HepG2 (cell line): ENCODE measurements at regions of chr12 and their contacts with region 1.

Region 1: GRCh38 chr12:74111688-74112360 is 425.8 kb upstream of the ATXN7L3B start:
- DNase-seq: peak; percentile 13
- ATAC-seq: peak; percentile 76
- H3K4me3 ChIP-seq: no peak overlapping the region
- H3K27ac ChIP-seq: no peak overlapping the region
- H3K4me1 ChIP-seq: no peaks in the 10 kb centered on the region
- H3K27me3 ChIP-seq: no peaks in the 10 kb centered on the region
- CTCF ChIP-seq: peak; percentile 63
- EP300 ChIP-seq: no peak
- POLR2A ChIP-seq: no peak
- RAD21 ChIP-seq: no peak

Region 2: GRCh38 chr12:73714655-73715054 is 397.2 kb before region 1 on chr12:
- CTCF ChIA-PET with region 1: no interaction called
- POLR2A ChIA-PET with region 1: no interaction called
- in situ Hi-C with region 1: no loop called
- intact Hi-C with region 1: no loop called
- DNase-seq: no peak
- ATAC-seq: no peak
- H3K4me3 ChIP-seq: no peak overlapping the region
- H3K27ac ChIP-seq: no peak overlapping the region
- H3K4me1 ChIP-seq: no peaks in the 10 kb centered on the region
- H3K27me3 ChIP-seq: no peaks in the 10 kb centered on the region
- CTCF ChIP-seq: no peak
- EP300 ChIP-seq: no peak
- POLR2A ChIP-seq: no peak
- RAD21 ChIP-seq: no peak

Region 3: GRCh38 chr12:74170645-74171477 is 59.0 kb after region 1 on chr12:
- CTCF ChIA-PET with region 1: no interaction called
- POLR2A ChIA-PET with region 1: no interaction called
- in situ Hi-C with region 1: no loop called
- intact Hi-C with region 1: no loop called
- DNase-seq: no peak
- ATAC-seq: no peak
- H3K4me3 ChIP-seq: no peak overlapping the region
- H3K27ac ChIP-seq: no peak overlapping the region
- H3K4me1 ChIP-seq: no peaks in the 10 kb centered on the region
- H3K27me3 ChIP-seq: no peaks in the 10 kb centered on the region
- CTCF ChIP-seq: no peak
- EP300 ChIP-seq: no peak
- POLR2A ChIP-seq: no peak
- RAD21 ChIP-seq: no peak

Region 4: DNA sequence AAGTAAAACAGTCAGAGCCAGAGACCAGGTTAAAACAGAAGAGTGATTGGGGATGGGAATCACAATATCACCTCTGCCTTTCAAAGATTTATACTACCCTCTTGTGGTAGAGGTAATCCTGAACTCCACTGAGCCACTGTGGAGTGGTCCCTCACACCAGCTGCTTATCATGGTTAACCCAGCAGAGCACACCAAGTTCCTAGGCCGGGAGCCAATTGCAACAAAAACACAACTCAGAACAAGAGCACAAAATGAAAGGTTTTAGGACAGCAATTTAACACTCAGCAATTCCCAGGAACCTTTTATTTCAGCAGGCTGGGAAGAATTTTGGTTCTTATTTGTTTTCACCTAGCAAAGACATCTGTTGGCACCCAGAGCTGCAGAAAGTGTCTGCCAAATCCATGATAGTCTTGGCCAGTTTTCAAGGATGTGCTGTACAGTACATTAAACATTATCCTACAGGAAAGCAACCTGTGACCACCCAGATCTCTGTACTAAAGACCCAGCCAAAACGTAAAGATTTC is 205.3 kb after region 1 on chr12:
- CTCF ChIA-PET with region 1: no interaction called
- POLR2A ChIA-PET with region 1: no interaction called
- in situ Hi-C with region 1: no loop called
- intact Hi-C with region 1: loop called (anchors 1 kb)
- DNase-seq: no peak
- ATAC-seq: peak; percentile 84
- H3K4me3 ChIP-seq: no peak overlapping the region
- H3K27ac ChIP-seq: no peak overlapping the region
- H3K4me1 ChIP-seq: no peaks in the 10 kb centered on the region
- H3K27me3 ChIP-seq: no peaks in the 10 kb centered on the region; a peak in 1 of 5 replicates
- CTCF ChIP-seq: peak; percentile 50
- EP300 ChIP-seq: no peak
- POLR2A ChIP-seq: no peak
- RAD21 ChIP-seq: no peak